Transverse colon (tissue), 4 donors: ENCODE measurements at regions of chr4 and their contacts with region 1.

Region 1: DNA sequence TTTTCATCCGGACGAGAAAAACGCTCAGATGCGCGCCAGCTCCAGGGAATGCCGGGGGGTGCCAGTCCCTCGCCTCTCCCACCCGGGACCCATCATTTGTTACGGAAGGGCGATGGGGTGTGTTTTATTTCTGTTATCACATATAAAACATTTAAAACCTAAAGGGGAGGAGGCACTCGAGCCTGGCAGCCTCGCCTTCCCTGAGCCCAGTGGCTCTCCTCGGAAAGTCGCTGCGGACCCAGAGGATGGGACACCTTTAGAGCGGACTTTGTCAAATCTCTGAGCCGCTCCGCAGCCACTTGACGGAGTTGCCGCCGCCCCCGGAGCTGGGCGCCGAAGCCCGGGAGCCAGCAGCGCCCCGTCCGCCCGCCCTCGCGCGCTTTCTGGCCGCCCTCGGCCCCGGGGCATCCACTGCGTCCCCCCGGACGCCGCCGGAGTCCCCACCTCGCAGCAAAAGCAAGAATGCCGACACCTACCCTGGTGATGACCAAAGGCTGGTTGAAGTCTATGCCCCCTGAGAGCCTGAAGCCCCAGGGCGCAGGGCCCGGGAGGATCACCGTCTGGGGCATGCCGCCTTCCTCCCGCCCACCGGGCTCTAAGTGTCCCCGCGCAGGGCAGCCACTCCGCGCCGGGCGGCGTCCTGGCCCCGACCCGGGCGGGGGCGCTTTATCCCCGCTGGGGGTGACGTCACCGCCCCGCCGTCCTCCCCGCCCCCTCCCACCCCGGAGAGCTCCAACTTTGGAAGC is at the start of gene PDLIM3:
- DNase-seq: peak; percentile 58
- H3K4me3 ChIP-seq: peak within 1 kb of the TSS; percentile 41 to 82 (median 64)
- H3K27ac ChIP-seq: peak within 1 kb of the TSS; percentile 84 to 95 (median 90)
- H3K4me1 ChIP-seq: peaks cover 3 to 15% (median 10%) of the 10 kb centered on the region in 4 donors
- H3K27me3 ChIP-seq: peaks cover 65% of the 10 kb centered on the region
- CTCF ChIP-seq: no peak
- EP300 ChIP-seq: no peak
- POLR2A ChIP-seq: peak; percentile 78
- total RNA-seq, gene PDLIM3: 81.9 to 209 (median 115) TPM

Region 2: GRCh38 chr4:185597532-185598188 is 62.6 kb after region 1 on chr4:
- in situ Hi-C with region 1: no loop called
- intact Hi-C with region 1: loop called (anchors 10 kb)
- DNase-seq: peak; percentile 74
- H3K4me3 ChIP-seq: no peak overlapping the region
- H3K27ac ChIP-seq: peak overlapping the region in 3 of 4 donors; percentile 49 to 70 (median 65)
- H3K4me1 ChIP-seq: no peaks in the 10 kb centered on the region
- H3K27me3 ChIP-seq: no peaks in the 10 kb centered on the region
- CTCF ChIP-seq: peak; percentile 96 to 99 (median 99)
- EP300 ChIP-seq: no peak
- POLR2A ChIP-seq: no peak